Left ventricle myocardium superior (tissue), 1 donor: ENCODE measurements at regions of chr3 and their contacts with region 1.

Region 1: GRCh38 chr3:133377396-133377795 is 22.5 kb upstream of the BFSP2 start:
- DNase-seq: no peak
- ATAC-seq: peak; percentile 70

Region 2: DNA sequence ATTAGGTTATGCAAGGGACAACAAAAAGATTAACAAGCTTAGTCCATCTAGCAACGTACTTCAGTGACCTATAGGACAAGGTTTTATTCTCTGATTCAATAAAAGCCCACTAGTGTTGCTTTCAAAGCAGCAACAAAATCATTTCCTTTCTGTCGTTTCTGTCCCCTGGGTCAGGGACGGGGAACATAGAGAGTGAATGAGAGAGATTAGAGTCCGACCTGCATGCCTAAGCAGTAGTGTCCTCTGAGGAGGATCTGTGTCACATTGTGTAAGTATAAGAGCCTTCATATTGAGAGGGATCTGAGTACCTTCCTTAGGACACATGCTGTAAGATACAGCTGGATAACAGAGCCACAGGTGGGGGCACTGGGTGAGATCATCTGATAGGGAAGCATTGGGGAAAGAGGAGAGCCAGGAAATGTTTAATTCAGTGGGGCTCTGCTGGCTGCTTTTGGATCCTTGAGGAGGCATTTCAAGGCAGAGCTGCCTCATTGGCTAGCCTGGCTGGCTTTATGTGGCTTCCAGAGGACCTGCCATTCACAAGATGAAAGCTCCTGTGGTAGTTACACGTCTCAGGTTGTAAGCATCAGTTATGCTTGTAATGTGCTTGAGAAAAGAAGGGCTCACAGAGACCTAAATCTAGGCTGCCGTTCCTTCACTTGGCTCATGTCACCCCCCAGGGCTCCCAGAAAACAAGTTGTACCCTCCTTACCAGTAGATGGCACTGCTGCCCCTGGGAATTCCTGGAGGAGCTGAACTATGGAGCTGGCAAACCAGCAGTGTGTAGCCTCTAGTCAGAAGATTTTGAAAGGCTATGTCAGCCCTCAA is 336.5 kb before region 1 on chr3:
- intact Hi-C with region 1: loop called (anchors 10 kb)
- DNase-seq: peak; percentile 63
- ATAC-seq: peak; percentile 85